ENCODE measurements at regions of chr17 and their contacts with region 1.

Region 1: DNA sequence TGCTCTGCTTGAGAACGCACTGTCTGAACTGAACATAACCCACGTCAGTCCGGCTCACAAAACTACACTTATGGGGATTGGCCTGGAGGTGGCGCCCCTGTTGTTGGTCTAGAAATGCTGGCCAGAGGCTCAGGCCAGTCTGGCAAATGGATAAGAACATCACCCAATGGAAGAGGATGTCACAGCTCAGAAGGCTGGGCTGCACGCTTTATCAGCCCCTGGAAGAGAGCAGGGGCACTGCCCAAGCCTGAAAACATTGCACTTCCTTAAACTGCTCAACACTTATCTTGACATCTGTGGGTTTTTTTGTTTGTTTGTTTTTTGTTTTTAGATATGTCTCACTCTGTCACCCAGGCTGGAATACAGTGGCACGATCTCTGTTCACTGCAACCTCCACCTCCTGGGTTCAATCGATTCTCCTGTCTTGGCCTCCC is 24.8 kb upstream of the BPTF start:
- DNase-seq: peak; percentile 59 to 87
- H3K4me3 ChIP-seq: no peak overlapping the region
- H3K27ac ChIP-seq: no peak overlapping the region
- H3K4me1 ChIP-seq: peaks cover 0 to 3% (median 0%) of the 10 kb centered on the region in 4 experiments; a peak in 2 of 7 replicates
- H3K27me3 ChIP-seq: no peaks in the 10 kb centered on the region; a peak in 1 of 7 replicates
- CTCF ChIP-seq: peak; percentile 83 to 88 (median 86)
- EP300 ChIP-seq: no peak
- POLR2A ChIP-seq: no peak
- RAD21 ChIP-seq: peak; percentile 80 to 88

Region 2: DNA sequence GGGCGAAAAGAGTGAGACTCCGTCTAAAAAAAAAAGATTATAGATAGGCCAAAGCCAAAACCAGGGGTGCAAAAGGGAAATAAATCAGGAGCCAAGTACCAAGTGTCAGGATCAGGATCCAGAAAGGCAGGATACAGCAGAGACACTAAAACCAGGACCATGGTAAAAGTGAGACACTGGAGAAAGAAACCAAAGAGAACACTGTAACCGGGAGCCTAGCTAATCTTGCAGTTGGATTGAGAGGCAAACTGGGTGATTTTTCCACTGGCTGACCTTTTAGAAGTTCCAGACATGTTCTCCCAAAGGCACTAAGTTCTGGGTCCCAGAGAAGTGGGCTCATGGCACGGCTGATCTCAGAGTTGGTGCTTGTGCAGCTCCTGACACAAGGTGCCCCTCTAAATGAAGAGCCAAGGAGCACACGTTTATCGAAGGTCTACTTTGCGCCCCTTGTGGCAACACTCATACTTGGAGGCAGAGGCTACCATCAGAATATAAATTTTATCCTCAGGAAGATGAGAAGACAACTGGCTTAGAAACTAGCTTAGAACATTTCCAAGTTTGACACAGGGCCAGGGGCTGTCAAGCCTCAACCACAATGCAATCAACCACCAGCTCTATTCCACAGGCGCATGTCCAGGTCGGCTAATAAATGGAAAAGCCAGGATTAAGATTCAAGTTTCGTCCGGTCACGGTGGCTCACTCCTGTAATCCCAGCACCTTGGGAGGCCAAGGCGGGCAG is 528.0 kb before region 1 on chr17:
- CTCF ChIA-PET with region 1: no interaction called
- POLR2A ChIA-PET with region 1: no interaction called
- DNase-seq: peak in 1 of 2 experiments; percentile 62
- H3K4me3 ChIP-seq: no peak overlapping the region
- H3K27ac ChIP-seq: no peak overlapping the region
- H3K4me1 ChIP-seq: no peaks in the 10 kb centered on the region
- H3K27me3 ChIP-seq: no peaks in the 10 kb centered on the region
- CTCF ChIP-seq: peak; percentile 47 to 79 (median 58)
- EP300 ChIP-seq: no peak
- POLR2A ChIP-seq: no peak
- RAD21 ChIP-seq: peak; percentile 37 to 50

Region 3: GRCh38 chr17:67671492-67671891 is 129.0 kb before region 1 on chr17:
- CTCF ChIA-PET with region 1: no interaction called
- POLR2A ChIA-PET with region 1: no interaction called
- DNase-seq: no peak
- H3K4me3 ChIP-seq: no peak overlapping the region
- H3K27ac ChIP-seq: no peak overlapping the region
- H3K4me1 ChIP-seq: no peaks in the 10 kb centered on the region
- H3K27me3 ChIP-seq: no peaks in the 10 kb centered on the region
- CTCF ChIP-seq: no peak
- EP300 ChIP-seq: no peak
- POLR2A ChIP-seq: no peak
- RAD21 ChIP-seq: no peak

Region 4: GRCh38 chr17:67751101-67752074 is 49.1 kb before region 1 on chr17:
- CTCF ChIA-PET with region 1: interaction called, 13 read pairs
- POLR2A ChIA-PET with region 1: interaction called, 3 read pairs
- DNase-seq: peak in 1 of 2 experiments; percentile 61
- H3K4me3 ChIP-seq: no peak overlapping the region
- H3K27ac ChIP-seq: peak overlapping the region; percentile 60
- H3K4me1 ChIP-seq: peaks cover 0 to 21% (median 18%) of the 10 kb centered on the region in 4 experiments; a peak in 6 of 7 replicates
- H3K27me3 ChIP-seq: no peaks in the 10 kb centered on the region
- CTCF ChIP-seq: no peak
- EP300 ChIP-seq: no peak
- POLR2A ChIP-seq: no peak
- RAD21 ChIP-seq: no peak

Region 5: DNA sequence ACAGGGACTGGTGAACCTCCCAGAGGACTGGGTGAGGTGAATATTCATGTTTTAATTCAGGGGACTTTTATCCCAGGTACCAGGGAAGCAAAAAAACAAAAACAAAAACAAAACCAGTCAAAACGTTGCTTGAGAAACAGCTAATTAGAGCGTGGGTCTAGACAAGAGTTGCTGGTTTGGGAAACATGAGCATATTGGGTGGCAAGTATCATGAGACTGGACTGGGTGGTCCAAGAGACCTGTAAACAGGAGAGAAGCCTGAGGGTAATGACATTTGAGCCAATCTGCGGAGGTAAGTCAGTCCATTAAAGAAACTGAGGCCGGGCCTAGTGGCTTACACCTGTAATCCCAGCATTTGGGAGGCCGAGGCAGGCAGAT is 13.3 kb after region 1 on chr17:
- CTCF ChIA-PET with region 1: interaction called, 88 read pairs
- POLR2A ChIA-PET with region 1: interaction called, 4 read pairs
- DNase-seq: no peak
- H3K4me3 ChIP-seq: no peak overlapping the region
- H3K27ac ChIP-seq: no peak overlapping the region
- H3K4me1 ChIP-seq: no peaks in the 10 kb centered on the region
- H3K27me3 ChIP-seq: no peaks in the 10 kb centered on the region
- CTCF ChIP-seq: no peak
- EP300 ChIP-seq: no peak
- POLR2A ChIP-seq: no peak
- RAD21 ChIP-seq: no peak

Region 6: DNA sequence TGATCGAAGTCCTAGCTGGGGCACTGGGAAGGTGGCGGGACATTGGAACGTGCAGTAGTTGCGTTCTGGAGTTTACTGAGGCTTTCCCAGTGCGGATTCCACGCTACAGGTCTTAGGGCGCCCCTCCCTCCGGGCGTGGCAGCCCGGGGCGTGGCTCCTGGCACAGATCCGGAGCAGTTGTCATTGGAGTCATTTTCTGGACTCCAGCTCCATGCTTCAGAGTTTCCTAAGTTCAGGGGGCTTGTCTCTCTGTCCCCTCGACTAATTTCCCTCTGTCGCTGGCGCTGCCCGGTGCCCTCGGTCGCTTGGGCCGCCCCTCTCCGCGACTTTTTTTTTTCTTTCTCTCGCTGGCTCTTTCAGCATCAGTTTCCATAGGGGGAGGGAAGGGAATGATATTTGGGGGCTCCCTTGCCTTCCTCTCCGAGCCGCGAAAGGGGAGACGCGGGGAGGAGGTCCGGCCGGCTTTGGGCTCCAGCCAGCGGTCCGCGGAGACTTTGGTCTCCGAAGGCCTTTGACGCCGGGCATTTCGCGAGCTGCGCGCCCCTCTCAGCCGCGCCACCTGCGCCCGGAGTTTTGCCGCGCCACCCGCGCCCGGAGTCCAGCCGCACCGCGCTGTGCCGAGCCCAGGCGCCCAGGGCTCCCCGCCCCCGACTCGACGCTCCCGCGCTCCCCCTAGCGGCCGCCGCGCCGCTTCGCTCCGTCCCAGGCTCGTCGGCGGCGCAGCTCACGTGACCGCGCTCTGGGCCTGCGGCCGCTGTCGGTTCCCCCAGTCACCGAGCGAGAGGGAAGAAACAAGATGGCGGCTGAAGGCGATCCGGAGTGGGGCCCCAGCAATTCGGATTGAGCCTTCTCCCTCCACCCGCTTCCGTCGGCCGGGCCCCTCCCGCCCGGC is 24.5 kb after region 1 on chr17 and contains the start of gene BPTF:
- CTCF ChIA-PET with region 1: interaction called, 78 read pairs
- POLR2A ChIA-PET with region 1: interaction called, 8 read pairs
- DNase-seq: peak; percentile 70 to 93
- H3K4me3 ChIP-seq: peak within 1 kb of the TSS; percentile 65 to 97 (median 90)
- H3K27ac ChIP-seq: peak within 1 kb of the TSS; percentile 98
- H3K4me1 ChIP-seq: peaks cover 0 to 4% (median 0%) of the 10 kb centered on the region in 4 experiments; a peak in 2 of 7 replicates
- H3K27me3 ChIP-seq: no peaks in the 10 kb centered on the region
- CTCF ChIP-seq: peak; percentile 90 to 98 (median 98)
- EP300 ChIP-seq: peak; percentile 32 to 78; a peak in 2 of 3 replicates
- POLR2A ChIP-seq: peak; percentile 82
- RAD21 ChIP-seq: peak; percentile 37 to 68
- total RNA-seq, gene BPTF: 223 and 228 TPM in 2 replicates